ENCODE measurements at regions of chr17 and their contacts with region 1.

Region 1: DNA sequence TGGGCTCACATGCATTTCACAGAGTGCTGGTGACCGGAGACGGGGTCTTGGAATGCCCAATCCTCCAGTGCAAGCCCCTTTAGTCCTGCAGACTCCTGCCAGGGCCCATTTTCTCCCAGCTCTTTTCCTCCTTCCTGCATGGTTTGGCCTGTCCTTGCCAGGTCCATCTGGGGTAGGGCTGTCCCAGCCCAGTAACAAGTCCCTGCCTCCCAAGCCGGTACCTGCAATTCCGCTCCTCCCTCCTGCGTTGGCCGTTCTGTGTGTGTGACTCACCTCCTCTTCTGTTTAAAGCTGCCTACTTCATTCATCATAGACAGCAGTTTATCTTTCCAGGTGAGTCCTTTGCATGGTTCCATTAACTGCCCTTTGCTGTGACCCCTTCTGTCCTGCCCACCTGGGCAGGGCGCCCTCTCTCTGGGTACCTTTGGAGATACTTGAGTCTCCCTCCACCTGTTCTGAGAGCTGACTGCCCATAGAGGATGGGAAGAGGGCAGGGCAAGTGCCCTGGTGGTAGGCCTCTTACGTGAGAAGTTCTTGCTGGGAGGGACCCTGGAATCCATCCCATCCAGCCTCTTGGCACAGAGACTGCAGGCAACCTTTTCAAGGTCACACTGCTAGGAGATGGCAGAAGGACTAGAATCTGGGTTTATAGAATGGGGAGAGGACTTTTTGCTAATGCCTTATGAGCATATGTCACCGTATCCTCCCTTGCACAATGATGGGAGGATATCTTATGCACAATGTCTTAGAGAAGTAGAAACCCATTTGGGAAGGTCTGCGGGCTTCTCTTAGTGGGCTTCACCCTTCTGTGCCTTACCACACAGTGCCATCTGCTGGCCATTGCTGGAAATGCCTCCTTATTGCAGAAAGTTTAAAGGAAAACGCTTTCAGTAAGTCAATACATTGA is 29.7 kb upstream of the LGALS9 start:
- DNase-seq: no peak
- ATAC-seq: peak; percentile 72
- H3K4me3 ChIP-seq: no peak overlapping the region
- H3K27ac ChIP-seq: no peak overlapping the region
- H3K4me1 ChIP-seq: peaks cover 3% of the 10 kb centered on the region
- H3K27me3 ChIP-seq: no peaks in the 10 kb centered on the region
- CTCF ChIP-seq: peak; percentile 92

Region 2: DNA sequence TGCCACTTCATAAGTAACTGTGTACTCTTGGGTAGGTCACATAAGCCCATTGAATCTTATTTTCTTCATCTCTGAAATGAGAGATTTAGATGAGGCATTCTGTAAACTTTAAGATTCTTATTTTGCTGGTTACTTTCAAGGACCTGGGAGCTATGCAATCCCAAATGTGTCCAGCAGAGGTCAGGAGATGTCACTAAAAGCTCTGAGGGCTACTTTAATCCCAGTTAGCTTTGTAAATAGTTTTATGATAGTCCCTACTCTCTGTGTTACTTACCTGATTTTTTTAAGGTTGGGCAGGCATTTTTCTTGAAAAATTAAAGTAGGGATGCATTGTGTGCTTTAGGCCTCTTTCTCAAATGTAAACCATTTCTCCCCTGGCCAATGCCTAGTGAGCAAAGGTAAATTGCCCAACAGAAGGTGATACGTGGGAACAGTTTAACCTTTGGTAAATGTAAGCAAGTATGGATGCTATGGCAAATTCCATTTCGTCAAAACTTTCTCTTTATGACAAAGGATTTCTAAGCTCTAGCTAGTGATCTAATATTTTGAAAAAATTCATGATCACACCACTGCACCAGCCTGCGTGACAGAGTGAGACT is 364.5 kb before region 1 on chr17:
- intact Hi-C with region 1: loop called (anchors 10 kb)
- DNase-seq: no peak
- ATAC-seq: peak; percentile 86
- H3K4me3 ChIP-seq: no peak overlapping the region
- H3K27ac ChIP-seq: no peak overlapping the region
- H3K4me1 ChIP-seq: peaks cover 21% of the 10 kb centered on the region
- H3K27me3 ChIP-seq: no peaks in the 10 kb centered on the region
- CTCF ChIP-seq: peak; percentile 96

Region 3: DNA sequence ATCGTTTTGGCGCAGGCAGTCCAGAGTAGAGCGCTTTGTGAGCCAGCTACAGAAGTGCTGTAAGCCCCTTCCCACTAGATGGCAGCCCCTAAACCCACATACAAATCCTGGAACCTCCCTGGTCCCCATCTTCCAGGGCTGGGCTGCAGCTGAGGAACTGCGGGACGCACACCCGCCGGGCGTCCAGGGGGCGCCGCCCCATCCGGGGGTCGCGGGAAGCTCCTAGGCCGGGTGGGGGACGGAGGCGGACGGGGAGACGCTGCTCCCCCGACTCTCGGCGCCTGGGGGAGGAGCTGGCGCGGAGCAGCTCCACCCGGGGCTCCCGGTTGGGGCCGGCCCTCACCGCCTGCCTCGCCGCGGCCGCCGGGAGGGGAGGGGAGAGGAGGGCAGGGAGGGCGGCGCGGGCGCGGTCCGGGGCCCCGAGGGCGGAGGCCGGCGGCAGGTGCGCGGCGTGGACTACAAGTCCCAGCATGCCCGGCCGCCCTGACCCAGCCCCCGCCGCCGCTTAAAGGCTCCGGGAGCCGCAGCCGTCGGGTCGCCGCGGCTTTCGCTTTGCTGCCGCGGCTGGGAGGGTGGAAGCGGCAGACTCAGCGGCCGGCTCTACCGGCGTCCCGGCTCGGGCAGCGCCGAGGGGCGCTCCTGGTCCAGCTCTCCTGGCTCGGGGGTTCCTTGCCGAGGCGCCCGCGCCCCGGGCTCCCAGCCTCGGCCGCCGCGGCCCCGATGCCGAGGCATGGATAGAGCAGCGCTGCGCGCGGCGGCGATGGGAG is 145.2 kb before region 1 on chr17 and contains the start of gene KSR1:
- intact Hi-C with region 1: loop called (anchors 10 kb)
- DNase-seq: peak; percentile 94
- ATAC-seq: peak; percentile 97
- H3K4me3 ChIP-seq: peak within 1 kb of the TSS; percentile 78
- H3K27ac ChIP-seq: peak within 1 kb of the TSS; percentile 65
- H3K4me1 ChIP-seq: peaks cover 30% of the 10 kb centered on the region
- H3K27me3 ChIP-seq: no peaks in the 10 kb centered on the region
- CTCF ChIP-seq: peak; percentile 42
- total RNA-seq, gene KSR1: 52.5 TPM

Region 4: GRCh38 chr17:27651411-27652345 is 50.4 kb after region 1 on chr17:
- intact Hi-C with region 1: loop called (anchors 1 kb)
- DNase-seq: no peak
- ATAC-seq: peak; percentile 76
- H3K4me3 ChIP-seq: no peak overlapping the region
- H3K27ac ChIP-seq: no peak overlapping the region
- H3K4me1 ChIP-seq: no peaks in the 10 kb centered on the region
- H3K27me3 ChIP-seq: no peaks in the 10 kb centered on the region
- CTCF ChIP-seq: peak; percentile 92